Right ventricle myocardium inferior (tissue), 1 donor: ENCODE measurements at regions of chr2 and their contacts with region 1.

Region 1: DNA sequence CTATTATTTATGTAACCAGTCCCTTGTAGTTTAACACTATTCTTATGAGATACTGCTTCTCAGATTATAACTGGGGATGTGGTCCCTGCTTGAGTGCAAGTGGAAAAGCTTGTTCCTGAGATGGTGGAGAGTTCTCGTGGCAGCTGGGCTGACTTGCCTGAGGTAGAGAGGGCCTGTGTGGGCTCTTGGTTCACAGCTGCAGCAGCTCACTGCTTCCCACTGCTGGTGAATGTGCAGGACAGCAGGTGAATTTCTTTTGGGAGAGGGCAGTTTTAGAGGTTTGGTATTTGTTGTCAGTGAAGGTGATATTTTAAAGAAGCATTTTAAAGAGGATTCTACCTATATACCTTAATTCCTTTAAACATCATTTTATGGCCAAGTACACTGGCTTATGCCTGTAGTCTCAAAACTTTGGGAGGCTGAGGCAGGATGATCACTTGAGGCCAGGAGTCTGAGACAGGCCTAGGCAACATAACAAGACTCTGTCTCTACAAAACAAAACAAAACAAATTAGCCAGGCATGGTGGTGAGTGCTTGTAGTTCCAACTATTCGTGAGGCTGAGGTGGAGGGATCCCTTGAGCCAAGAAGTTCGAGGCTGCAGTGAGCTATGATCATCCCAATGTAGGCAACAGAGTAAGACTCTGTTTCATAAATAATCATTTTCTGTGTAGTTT is 94.8 kb downstream of the MTA3 start:
- DNase-seq: no peak
- ATAC-seq: peak; percentile 79

Region 2: DNA sequence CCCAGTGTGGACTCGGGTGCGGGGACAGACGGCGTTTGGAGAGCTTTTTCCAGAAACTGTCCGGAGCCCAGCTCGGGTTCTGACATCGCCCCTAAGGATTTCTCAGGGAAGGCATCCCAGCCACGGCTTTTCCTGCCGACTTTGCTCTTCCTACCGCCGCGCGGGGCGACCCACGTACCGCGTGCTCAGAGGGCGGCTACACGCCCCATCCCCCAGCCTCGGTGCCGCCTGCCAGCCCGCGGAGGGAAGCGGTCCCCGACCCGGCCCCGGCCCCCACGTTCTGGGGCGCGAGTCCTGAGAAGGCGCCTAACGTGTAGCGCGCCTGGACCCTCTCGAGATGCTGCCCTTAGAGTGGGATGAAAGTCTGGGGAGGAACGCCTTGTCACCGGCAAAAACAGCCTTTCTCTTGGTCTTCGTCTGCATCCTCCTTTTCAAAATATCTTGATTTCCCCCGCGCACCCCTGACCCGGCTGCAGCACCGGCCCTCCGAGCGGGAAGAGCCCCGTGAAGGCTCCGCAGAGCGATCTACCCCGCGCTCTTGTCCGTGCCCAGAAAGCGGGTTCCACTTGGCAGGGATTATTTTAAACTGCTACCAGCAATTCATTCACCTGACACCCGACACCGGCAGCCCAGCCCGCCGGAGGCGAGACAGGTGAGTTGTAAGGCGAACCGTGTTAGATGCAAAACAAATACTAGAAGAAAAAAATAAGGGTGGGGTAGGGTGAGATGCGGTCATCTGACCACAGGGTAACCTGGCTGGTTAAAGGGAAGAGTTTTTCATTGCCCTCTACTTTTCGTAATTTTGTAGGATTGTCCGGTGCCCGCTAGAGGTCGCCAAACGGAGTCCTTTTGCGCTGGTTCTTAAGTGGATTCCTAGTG is 168.6 kb before region 1 on chr2:
- intact Hi-C with region 1: loop called (anchors 2 kb)
- DNase-seq: peak; percentile 73
- ATAC-seq: peak; percentile 47

Region 3: DNA sequence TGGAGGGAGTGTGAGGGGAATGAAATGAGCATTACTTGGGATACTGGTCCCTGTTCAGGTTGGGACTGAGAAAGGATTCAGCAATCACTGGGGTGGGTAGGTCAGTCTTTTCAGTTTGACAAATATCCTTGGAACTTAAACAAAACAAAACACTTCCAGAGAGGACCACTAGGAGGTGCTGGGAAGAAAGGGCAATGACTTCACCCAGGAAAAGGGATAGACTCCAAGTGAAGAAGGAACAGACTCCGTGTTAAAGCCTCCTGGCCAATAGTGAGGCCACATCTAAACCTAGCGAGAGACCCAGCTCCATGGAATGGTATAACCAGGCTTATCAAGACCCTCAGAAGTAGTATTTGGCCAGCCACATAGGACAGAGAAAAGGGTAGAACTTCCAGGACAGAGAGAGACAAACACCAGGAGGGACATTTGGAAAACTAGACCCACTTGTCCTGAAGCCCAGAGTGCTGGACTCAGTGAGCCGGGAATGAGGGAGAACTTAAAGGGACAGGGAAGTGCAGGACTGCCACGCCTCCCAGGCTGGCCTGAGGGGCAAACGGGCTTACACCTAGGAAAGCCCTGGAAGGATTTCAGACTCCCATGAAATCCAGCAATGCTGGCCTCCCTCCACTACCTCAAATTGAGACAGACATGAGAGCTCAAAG is 149.9 kb before region 1 on chr2:
- intact Hi-C with region 1: loop called (anchors 2 kb)
- DNase-seq: no peak
- ATAC-seq: peak; percentile 44